ENCODE measurements at regions of chr2 and their contacts with region 1.

Region 1: DNA sequence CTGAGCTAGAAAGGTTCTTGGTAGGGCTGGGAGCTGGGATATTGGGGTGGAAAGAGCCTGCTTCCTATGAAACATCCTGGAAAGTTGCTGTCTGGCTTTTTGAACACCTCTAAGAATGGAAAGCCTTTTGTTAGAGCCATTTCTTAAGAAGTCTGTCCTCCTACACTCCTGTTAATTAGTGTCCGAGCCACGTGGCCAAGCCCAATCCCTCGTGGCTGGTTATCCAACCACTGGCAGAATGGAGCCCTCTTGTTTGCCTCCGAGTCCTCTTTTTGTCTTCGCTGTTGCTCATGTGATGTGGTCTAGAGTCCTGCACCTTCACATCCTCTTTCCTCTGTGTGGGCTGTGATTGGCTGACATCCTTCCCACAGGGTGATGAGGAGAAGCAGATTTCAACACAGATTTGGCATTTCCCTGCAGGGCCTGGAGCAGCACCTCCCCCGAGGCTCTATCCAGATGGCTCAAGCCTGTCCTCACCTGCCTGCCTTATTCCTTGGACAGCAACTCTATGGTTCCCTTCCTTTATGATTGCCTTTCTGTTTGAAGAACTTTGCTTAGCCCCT is 8.2 kb upstream of the TOGARAM2 start:
- H3K4me3 ChIP-seq: no peak overlapping the region
- H3K27ac ChIP-seq: no peak overlapping the region
- H3K4me1 ChIP-seq: no peaks in the 10 kb centered on the region
- CTCF ChIP-seq: no peak

Region 2: DNA sequence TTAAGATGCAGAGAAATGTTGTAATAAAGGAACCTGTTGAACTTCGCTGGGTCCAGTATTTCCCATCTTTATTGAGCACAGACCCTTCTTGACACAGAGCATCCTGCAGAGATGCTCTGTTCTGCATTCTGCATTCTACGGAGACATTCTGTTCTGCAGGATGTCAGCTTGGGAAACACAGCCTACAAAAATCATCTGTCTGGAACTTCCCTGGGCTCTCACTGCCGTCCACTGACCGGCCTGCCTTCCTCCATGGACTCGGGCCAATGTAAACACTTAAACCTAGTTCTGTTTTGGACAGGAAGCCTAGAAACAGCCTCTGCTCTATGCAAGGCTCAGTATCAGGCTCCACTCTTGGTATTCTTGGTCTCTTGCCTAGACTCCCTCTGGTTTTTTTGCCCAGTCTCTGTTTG is 311.3 kb before region 1 on chr2:
- CTCF ChIA-PET with region 1: no interaction called
- POLR2A ChIA-PET with region 1: no interaction called
- H3K4me3 ChIP-seq: no peak overlapping the region
- H3K27ac ChIP-seq: no peak overlapping the region
- H3K4me1 ChIP-seq: 0 out of 2 replicates have a peak, but pooled peaks cover 6% of the 10 kb centered on the region
- CTCF ChIP-seq: no peak

Region 3: GRCh38 chr2:28997237-28997846 is 24.5 kb after region 1 on chr2:
- CTCF ChIA-PET with region 1: no interaction called
- POLR2A ChIA-PET with region 1: interaction called, 11 read pairs
- H3K4me3 ChIP-seq: no peak overlapping the region
- H3K27ac ChIP-seq: no peak overlapping the region
- H3K4me1 ChIP-seq: no peaks in the 10 kb centered on the region
- CTCF ChIP-seq: no peak

Region 4: DNA sequence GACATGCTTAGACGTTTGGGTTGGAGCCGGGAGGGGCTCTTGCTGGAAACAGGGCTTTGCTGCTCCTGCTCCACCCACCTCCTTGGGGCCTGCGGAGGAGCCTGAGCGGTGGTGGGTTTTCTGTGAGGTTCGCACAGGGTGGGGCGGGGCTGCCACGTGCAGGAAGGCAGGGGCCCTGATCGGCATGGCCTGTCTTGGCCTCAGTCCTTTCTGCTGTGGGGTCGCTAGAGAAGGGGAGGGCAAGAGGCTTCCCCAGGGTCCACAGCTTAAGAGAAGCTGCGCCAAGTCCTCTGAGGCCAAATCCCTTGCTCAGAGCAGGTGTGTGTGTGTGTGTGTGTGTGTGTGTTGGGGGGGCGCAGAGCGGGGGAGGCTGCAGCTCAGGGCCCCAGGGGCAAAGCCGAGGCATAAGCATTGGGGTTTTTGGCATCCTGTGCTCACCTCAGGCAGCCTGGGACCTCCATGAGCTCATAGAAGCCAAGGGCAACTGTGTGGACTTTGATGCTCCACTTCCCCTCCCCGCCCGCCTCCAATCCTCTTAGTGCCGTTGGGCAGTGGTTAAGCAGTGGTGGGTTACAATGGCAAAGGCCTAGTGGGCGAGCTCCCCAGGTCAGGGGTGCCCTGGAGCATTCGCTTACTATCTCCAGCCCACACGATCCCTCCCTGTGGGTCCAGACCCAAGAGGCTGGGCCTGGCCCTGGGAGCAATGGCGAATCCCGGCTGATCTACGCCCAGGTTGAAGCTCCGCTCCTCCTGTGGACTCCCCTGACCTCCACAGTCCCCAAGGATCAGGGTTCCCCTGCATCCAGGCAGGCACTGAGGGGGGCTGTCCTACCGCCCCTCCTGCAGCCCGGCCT is 37.1 kb after region 1 on chr2:
- CTCF ChIA-PET with region 1: no interaction called
- POLR2A ChIA-PET with region 1: interaction called, 12 read pairs
- H3K4me3 ChIP-seq: no peak overlapping the region
- H3K27ac ChIP-seq: no peak overlapping the region
- H3K4me1 ChIP-seq: no peaks in the 10 kb centered on the region
- CTCF ChIP-seq: no peak